Heart right ventricle (tissue), 16 donors: ENCODE measurements at regions of chr9 and their contacts with region 1.

Region 1: DNA sequence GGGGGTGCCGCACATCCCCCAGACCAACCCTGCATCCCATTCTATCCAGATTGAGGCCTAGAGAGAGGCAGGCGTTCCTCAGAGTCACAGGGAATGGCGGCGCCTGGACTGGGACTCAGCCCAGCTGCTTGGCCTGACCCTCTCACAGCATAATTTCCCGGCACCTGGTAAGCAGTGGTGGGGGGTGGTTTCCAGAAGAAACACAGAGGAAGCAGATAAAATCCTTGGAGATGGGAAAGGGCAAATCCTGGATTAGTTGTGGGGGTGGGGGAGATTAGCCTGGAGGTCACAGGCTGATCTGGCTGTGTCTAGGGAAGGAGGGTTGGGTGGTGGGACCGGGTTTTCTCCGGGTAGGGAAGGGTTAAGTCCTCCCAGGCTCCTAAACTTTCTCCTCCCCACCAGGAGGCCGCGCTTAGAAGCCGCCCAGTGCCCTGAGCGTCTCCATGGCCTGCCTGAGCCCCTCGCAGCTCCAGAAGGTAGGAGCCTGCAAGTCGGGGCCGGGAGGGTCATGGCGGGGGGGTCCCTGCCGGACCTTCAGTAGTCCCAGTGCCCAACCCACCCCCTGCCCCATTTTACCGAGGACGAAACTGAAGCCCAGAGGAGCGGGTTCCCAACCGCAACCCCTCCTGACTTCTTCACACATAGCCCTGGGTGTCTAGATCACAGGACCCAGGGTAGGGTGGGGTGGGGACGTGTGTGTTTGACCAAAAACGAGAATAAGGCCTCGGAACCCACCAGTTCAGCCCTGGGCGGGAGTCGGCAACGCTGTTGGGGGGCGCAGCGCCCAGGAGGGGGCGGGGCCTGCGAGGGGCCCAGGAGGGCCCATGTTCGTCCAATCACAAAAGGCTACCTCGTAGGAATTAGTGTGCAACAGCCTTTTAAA is 1.3 kb downstream of the PHYHD1 start:
- DNase-seq: peak; percentile 63 to 64
- ATAC-seq: peak; percentile 66 to 81 (median 74)
- H3K4me3 ChIP-seq: peak overlapping the region; percentile 16 to 74 (median 62)
- H3K27ac ChIP-seq: peak overlapping the region; percentile 20 to 94 (median 87)
- H3K4me1 ChIP-seq: peaks cover 15 to 58% (median 46%) of the 10 kb centered on the region in 9 donors
- H3K27me3 ChIP-seq: no peaks in the 10 kb centered on the region
- CTCF ChIP-seq: peak in 3 of 9 donors; percentile 18 to 27 (median 22)

Region 2: GRCh38 chr9:128881901-128882681 is 40.0 kb before region 1 on chr9 and contains the starts of genes KYAT1 and LRRC8A:
- intact Hi-C with region 1: loop called in 8 of 10 experiments (anchors 1 to 5 kb)
- DNase-seq: peak; percentile 98 to 99
- ATAC-seq: peak; percentile 90 to 96 (median 94)
- H3K4me3 ChIP-seq: peak within 1 kb of the TSS; percentile 81 to 99 (median 96)
- H3K27ac ChIP-seq: peak within 1 kb of the TSS; percentile 96 to 100 (median 98)
- H3K4me1 ChIP-seq: peaks cover 4 to 79% (median 64%) of the 10 kb centered on the region in 9 donors
- H3K27me3 ChIP-seq: no peaks in the 10 kb centered on the region
- CTCF ChIP-seq: peak in 4 of 9 donors; percentile 14 to 39 (median 24)
- total RNA-seq, gene KYAT1: 8.9 to 20.3 (median 11.1) TPM
- total RNA-seq, gene LRRC8A: 15.2 to 45.1 (median 19.6) TPM